Transverse colon (tissue), 4 donors: ENCODE measurements at regions of chr11 and their contacts with region 1.

Region 1: DNA sequence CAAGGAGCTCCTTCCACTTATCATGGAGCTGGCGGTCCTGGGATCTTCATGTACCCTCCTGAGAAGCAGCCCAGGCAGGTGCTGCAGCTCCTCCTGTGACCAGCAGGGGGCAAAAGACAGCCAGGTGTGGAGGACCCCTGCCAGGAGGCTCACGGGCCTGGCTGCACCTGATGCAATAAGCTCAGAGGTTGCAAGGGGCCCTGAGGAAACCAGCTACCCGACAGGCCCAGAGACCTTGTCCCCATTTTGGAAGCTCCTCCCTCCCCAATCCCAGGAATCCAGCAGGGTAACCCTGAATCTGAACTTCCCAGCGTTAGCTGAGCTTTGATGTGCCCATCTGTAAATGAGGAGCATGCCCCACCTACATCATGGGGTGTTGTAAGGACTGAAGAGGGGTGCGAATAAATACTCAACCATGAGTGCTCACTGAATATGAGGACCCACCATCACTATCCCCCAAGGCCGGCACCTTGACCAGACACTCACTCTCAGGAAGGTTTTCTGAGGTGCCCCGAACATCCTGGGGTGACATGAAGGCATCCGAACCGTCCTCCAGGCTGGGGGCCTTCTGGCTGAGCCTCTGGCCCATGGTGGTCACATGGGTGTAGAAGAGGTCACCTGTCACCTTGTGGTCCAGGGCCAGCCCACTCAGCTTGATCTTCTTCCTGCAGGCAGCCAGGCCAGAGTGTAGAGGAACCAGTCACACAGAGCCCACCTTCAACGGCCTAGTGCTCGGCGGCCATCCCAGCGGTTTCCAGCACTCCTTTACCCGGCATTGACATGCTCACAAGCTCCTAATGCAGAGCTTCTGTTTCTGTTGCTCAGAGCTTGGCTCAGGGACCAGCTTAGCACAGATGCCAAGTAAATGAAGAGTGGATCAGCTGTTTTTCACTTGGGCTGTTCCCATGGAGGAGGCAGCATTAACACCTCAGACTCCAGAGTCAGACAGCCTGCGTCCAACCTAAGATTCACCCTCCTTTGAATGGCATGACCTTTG is 21.7 kb downstream of the SLC43A1 start:
- DNase-seq: peak; percentile 68
- H3K4me3 ChIP-seq: no peak overlapping the region
- H3K27ac ChIP-seq: no peak overlapping the region
- H3K4me1 ChIP-seq: peaks cover 0 to 3% (median 1%) of the 10 kb centered on the region in 4 donors
- H3K27me3 ChIP-seq: no peaks in the 10 kb centered on the region
- CTCF ChIP-seq: peak; percentile 80 to 94 (median 89)
- EP300 ChIP-seq: no peak
- POLR2A ChIP-seq: no peak

Region 2: GRCh38 chr11:57527056-57527631 is 33.3 kb after region 1 on chr11:
- in situ Hi-C with region 1: loop called in 1 of 4 experiments (anchors 5 kb)
- intact Hi-C with region 1: loop called (anchors 2 kb)
- DNase-seq: peak; percentile 78
- H3K4me3 ChIP-seq: no peak overlapping the region
- H3K27ac ChIP-seq: no peak overlapping the region
- H3K4me1 ChIP-seq: peaks cover 9 to 20% (median 13%) of the 10 kb centered on the region in 4 donors
- H3K27me3 ChIP-seq: no peaks in the 10 kb centered on the region
- CTCF ChIP-seq: peak; percentile 89 to 92 (median 91)
- EP300 ChIP-seq: no peak
- POLR2A ChIP-seq: no peak

Region 3: GRCh38 chr11:57597916-57598830 is 104.4 kb after region 1 on chr11:
- in situ Hi-C with region 1: no loop called
- intact Hi-C with region 1: no loop called
- DNase-seq: peak; percentile 62
- H3K4me3 ChIP-seq: peak overlapping the region; percentile 30 to 55 (median 36)
- H3K27ac ChIP-seq: peak overlapping the region; percentile 77 to 91 (median 86)
- H3K4me1 ChIP-seq: peaks cover 0 to 16% (median 0%) of the 10 kb centered on the region in 4 donors
- H3K27me3 ChIP-seq: peaks cover 9% of the 10 kb centered on the region
- CTCF ChIP-seq: no peak
- EP300 ChIP-seq: no peak
- POLR2A ChIP-seq: no peak